Vagina (tissue), 2 donors: ENCODE measurements at regions of chr14 and their contacts with region 1.

Region 1: DNA sequence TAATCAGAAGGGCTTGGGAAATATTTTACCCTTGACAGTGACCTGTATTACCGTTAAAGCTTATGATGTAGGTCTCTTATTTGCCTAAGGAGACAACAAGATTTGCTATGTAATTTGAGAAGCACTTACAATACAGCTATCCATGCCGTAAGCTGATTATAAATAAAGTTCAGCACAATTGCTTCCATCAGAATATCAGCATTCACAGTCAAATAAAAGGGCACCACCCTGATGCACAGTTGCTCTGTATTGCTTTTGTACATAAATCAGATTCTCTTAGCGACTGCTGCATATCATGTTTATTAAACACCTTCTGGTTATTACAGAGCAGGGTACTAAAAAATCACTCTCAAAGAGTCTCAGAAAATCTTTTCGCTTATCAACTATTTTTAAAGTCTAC is 67.3 kb upstream of the VRK1 start:
- DNase-seq: no peak
- H3K4me3 ChIP-seq: no peak overlapping the region
- H3K27ac ChIP-seq: no peak overlapping the region
- H3K4me1 ChIP-seq: no peaks in the 10 kb centered on the region
- H3K27me3 ChIP-seq: no peaks in the 10 kb centered on the region
- CTCF ChIP-seq: no peak
- POLR2A ChIP-seq: no peak

Region 2: DNA sequence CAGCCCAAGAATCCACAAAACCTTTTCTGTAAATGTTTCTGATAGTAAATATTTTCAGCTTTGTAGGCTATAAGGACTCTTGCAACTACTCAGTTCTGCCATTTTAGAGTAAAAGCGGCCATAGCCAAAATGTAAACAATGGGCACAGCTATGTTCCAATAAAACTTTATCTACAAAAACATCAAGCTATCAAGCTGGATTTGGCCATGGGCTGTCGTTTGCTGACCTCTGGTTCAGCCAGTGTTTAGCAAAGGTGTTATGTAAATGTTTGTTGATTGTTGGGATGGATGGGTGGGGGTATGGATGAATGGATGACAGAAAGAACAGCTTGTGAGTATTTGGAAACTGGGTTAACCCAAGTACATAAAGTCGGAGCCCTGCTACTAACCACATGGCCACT is 43.8 kb before region 1 on chr14:
- intact Hi-C with region 1: loop called (anchors 2 kb)
- DNase-seq: no peak
- H3K4me3 ChIP-seq: no peak overlapping the region
- H3K27ac ChIP-seq: no peak overlapping the region
- H3K4me1 ChIP-seq: no peaks in the 10 kb centered on the region
- H3K27me3 ChIP-seq: no peaks in the 10 kb centered on the region
- CTCF ChIP-seq: no peak
- POLR2A ChIP-seq: no peak

Region 3: GRCh38 chr14:96844857-96845570 is 115.1 kb after region 1 on chr14:
- intact Hi-C with region 1: no loop called
- DNase-seq: no peak
- H3K4me3 ChIP-seq: no peak overlapping the region
- H3K27ac ChIP-seq: no peak overlapping the region
- H3K4me1 ChIP-seq: no peaks in the 10 kb centered on the region
- H3K27me3 ChIP-seq: no peaks in the 10 kb centered on the region
- CTCF ChIP-seq: no peak
- POLR2A ChIP-seq: no peak